A549 (cell line): ENCODE measurements at regions of chr7 and their contacts with region 1.

Region 1: GRCh38 chr7:91835846-91836368 is 44.6 kb downstream of the MTERF1 start:
- DNase-seq: no peak
- ATAC-seq: no peak
- H3K4me3 ChIP-seq: no peak overlapping the region
- H3K27ac ChIP-seq: no peak overlapping the region
- H3K4me1 ChIP-seq: no peaks in the 10 kb centered on the region
- CTCF ChIP-seq: no peak
- EP300 ChIP-seq: no peak
- POLR2A ChIP-seq: no peak
- RAD21 ChIP-seq: no peak

Region 2: GRCh38 chr7:91800389-91800788 is 35.5 kb before region 1 on chr7:
- CTCF ChIA-PET with region 1: interaction called, 10 read pairs
- POLR2A ChIA-PET with region 1: no interaction called
- DNase-seq: no peak
- ATAC-seq: peak in 1 of 2 experiments; percentile 54; a peak in 2 of 6 replicates
- H3K4me3 ChIP-seq: no peak overlapping the region
- H3K27ac ChIP-seq: no peak overlapping the region
- H3K4me1 ChIP-seq: no peaks in the 10 kb centered on the region
- CTCF ChIP-seq: no peak
- EP300 ChIP-seq: no peak
- POLR2A ChIP-seq: no peak
- RAD21 ChIP-seq: no peak